Activated CD4-positive, alpha-beta memory T cell treated with anti-CD3 and anti-CD28 coated beads for 36 hours (primary cell): ENCODE measurements at regions of chr16 and their contacts with region 1.

Region 1: GRCh38 chr16:10509534-10510025 is 70.8 kb downstream of the EMP2 start:
- DNase-seq: peak; percentile 66
- H3K4me3 Mint-ChIP-seq: no peak overlapping the region
- H3K27ac Mint-ChIP-seq: peak overlapping the region; percentile 24
- H3K4me1 Mint-ChIP-seq: peaks cover 22% of the 10 kb centered on the region
- H3K27me3 Mint-ChIP-seq: no peaks in the 10 kb centered on the region

Region 2: DNA sequence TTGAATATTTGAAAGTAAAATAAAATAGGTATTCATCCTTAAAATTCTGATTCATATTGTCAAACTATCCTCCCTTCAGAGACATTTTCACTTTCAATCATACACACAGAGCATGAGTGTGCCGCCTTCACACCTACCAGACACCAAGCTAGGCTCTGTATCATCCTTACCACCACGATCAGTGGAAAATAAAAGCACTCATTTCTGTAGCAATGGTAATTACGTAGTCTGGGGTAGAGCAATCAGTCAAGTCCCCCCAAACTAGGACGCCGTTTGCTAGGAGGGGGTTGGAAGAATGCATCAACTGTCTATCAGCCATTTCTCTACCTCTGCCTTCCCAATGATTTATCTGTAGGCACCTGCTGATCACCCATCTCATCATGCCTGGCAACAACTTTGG is 242.8 kb before region 1 on chr16:
- CTCF ChIA-PET with region 1: interaction called, 121 read pairs
- POLR2A ChIA-PET with region 1: no interaction called
- intact Hi-C with region 1: loop called (anchors 2 kb)
- DNase-seq: peak; percentile 68
- H3K4me3 Mint-ChIP-seq: no peak overlapping the region
- H3K27ac Mint-ChIP-seq: peak overlapping the region; percentile 51
- H3K4me1 Mint-ChIP-seq: peaks cover 10% of the 10 kb centered on the region
- H3K27me3 Mint-ChIP-seq: peaks cover 2% of the 10 kb centered on the region

Region 3: GRCh38 chr16:10332241-10332640 is 177.3 kb before region 1 on chr16:
- CTCF ChIA-PET with region 1: no interaction called
- POLR2A ChIA-PET with region 1: no interaction called
- intact Hi-C with region 1: no loop called
- DNase-seq: no peak
- H3K4me3 Mint-ChIP-seq: no peak overlapping the region
- H3K27ac Mint-ChIP-seq: no peak overlapping the region
- H3K4me1 Mint-ChIP-seq: peaks cover 37% of the 10 kb centered on the region
- H3K27me3 Mint-ChIP-seq: no peaks in the 10 kb centered on the region

Region 4: GRCh38 chr16:10385725-10386516 is 123.7 kb before region 1 on chr16 and contains the start of gene ATF7IP2:
- CTCF ChIA-PET with region 1: interaction called, 4 read pairs
- POLR2A ChIA-PET with region 1: no interaction called
- intact Hi-C with region 1: loop called (anchors 5 kb)
- DNase-seq: peak; percentile 94
- H3K4me3 Mint-ChIP-seq: peak within 1 kb of the TSS; percentile 97
- H3K27ac Mint-ChIP-seq: peak within 1 kb of the TSS; percentile 93
- H3K4me1 Mint-ChIP-seq: peaks cover 41% of the 10 kb centered on the region
- H3K27me3 Mint-ChIP-seq: no peaks in the 10 kb centered on the region
- total RNA-seq, gene ATF7IP2: 14.7 to 15.1 TPM

Region 5: DNA sequence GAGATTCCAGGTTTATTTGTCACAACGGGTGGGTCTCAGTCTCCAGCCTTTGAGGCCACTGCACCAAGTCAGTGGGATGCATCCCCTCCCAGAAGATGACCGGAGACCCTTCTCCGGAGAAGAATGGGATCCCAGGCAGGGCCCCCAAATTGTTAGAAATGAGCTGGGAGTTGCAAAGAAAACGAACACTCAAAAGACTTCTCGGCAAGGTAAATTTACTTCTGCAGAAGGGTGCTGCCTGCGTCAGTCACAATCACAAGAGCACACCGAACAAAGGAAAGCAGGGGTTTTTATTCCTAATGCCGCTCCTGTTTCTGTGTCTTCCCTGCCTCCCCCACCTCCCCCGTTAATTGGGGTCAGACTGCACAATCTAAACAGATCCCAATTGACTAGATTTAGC is 62.3 kb before region 1 on chr16:
- CTCF ChIA-PET with region 1: no interaction called
- POLR2A ChIA-PET with region 1: no interaction called
- intact Hi-C with region 1: no loop called
- DNase-seq: no peak
- H3K4me3 Mint-ChIP-seq: no peak overlapping the region
- H3K27ac Mint-ChIP-seq: no peak overlapping the region
- H3K4me1 Mint-ChIP-seq: no peaks in the 10 kb centered on the region
- H3K27me3 Mint-ChIP-seq: no peaks in the 10 kb centered on the region

Region 6: DNA sequence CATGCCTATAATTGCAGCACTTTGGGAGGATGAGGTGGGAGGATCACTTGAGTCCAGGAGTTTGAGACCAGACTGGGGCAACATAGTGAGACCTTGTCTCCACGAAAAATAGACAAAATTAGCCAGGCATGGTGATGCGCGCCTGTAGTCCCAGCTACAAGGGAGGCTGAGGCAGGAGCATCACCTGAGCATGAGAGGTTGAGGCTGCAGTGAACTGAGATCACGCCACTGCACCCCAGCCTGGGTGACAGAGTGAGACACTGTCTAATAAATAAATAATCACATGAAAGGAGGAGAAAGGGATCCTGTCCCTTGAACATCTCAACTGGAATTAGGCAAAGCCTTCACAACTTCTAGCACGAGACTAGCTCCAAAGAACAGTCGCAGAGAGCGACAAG is 132.0 kb after region 1 on chr16:
- CTCF ChIA-PET with region 1: no interaction called
- POLR2A ChIA-PET with region 1: no interaction called
- intact Hi-C with region 1: no loop called
- DNase-seq: no peak
- H3K4me3 Mint-ChIP-seq: no peak overlapping the region
- H3K27ac Mint-ChIP-seq: no peak overlapping the region
- H3K4me1 Mint-ChIP-seq: no peaks in the 10 kb centered on the region
- H3K27me3 Mint-ChIP-seq: peaks cover 4% of the 10 kb centered on the region

Region 7: DNA sequence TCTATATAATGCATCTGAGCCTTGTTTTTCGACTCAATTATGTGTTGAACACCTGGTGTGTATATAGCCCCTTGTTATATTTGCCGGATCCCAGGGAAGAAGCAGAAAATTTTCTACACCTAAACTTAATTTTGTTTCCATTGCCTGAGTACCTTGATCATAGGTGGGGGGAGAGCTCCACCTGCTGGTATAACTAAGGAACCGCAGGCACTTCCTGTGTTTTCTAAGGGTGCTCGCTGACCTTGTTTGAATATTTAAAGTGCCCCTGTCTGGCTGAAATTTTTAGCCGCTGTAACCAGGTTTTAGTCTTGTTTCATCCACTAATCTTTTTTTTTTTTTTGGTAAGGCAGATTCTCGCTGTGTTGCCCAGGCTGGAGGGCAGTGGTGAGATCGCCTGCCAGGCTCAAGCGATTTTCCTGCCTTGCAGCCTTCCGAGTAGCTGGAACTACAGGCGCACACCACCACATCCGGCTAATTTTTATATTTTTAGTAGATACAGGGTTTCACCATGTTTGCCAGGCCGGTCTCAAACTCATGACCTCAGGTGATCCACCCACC is 227.6 kb after region 1 on chr16:
- CTCF ChIA-PET with region 1: interaction called, 134 read pairs
- POLR2A ChIA-PET with region 1: no interaction called
- intact Hi-C with region 1: loop called (anchors 1 kb)
- DNase-seq: peak; percentile 78
- H3K4me3 Mint-ChIP-seq: peak overlapping the region; percentile 46
- H3K27ac Mint-ChIP-seq: peak overlapping the region; percentile 38
- H3K4me1 Mint-ChIP-seq: peaks cover 26% of the 10 kb centered on the region
- H3K27me3 Mint-ChIP-seq: no peaks in the 10 kb centered on the region

Region 8: DNA sequence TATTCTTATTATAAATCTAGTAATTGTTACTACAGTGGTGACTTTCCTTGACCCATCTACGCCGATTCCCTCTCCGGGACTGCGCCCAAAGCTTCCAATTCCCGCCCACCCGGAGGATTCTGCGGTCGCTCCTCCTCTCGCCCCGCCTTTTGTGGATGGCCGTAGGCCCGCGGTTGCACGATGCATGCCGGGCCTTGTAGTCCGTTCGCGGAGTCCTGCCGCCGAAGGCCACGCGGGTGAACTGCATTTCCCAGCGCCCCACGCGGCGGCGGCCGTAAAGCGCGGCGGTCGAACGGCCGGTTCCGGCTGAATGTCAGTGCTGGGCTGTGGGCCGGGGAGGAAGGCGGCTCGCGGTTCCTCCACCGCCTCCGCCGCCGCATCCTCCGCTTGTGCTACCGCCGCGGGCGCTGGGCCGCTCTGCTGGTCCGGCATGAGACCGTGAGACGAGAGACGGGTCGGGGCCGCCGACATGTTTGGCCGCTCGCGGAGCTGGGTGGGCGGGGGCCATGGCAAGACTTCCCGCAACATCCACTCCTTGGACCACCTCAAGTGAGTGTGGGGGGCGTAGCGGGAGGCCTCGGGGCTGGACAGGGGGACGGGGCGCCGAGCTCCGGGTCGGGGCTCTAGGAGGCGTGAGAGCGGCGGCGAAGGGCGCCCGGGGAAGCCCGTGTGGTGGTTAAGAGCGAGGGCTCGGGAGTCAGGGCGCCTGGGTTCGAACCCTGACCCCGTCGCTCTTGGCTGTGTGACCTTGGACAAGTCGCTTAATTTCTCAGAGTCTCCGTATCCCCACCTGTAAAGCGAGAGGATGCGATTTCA is 434.9 kb after region 1 on chr16 and contains the start of gene CLEC16A:
- CTCF ChIA-PET with region 1: interaction called, 11 read pairs
- POLR2A ChIA-PET with region 1: no interaction called
- intact Hi-C with region 1: loop called (anchors 5 kb)
- DNase-seq: peak; percentile 97
- H3K4me3 Mint-ChIP-seq: peak within 1 kb of the TSS; percentile 85
- H3K27ac Mint-ChIP-seq: peak within 1 kb of the TSS; percentile 57
- H3K4me1 Mint-ChIP-seq: peaks cover 60% of the 10 kb centered on the region
- H3K27me3 Mint-ChIP-seq: no peaks in the 10 kb centered on the region
- total RNA-seq, gene CLEC16A: 25.5 to 26.7 TPM